ENCODE measurements at regions of chr10 and their contacts with region 1.

Region 1: GRCh38 chr10:100346765-100347567 is at the start of gene SCD:
- DNase-seq: peak; percentile 92
- H3K4me3 ChIP-seq: peak within 1 kb of the TSS; percentile 95
- H3K27ac ChIP-seq: peak within 1 kb of the TSS; percentile 63
- H3K27me3 ChIP-seq: no peaks in the 10 kb centered on the region
- CTCF ChIP-seq: no peak

Region 2: DNA sequence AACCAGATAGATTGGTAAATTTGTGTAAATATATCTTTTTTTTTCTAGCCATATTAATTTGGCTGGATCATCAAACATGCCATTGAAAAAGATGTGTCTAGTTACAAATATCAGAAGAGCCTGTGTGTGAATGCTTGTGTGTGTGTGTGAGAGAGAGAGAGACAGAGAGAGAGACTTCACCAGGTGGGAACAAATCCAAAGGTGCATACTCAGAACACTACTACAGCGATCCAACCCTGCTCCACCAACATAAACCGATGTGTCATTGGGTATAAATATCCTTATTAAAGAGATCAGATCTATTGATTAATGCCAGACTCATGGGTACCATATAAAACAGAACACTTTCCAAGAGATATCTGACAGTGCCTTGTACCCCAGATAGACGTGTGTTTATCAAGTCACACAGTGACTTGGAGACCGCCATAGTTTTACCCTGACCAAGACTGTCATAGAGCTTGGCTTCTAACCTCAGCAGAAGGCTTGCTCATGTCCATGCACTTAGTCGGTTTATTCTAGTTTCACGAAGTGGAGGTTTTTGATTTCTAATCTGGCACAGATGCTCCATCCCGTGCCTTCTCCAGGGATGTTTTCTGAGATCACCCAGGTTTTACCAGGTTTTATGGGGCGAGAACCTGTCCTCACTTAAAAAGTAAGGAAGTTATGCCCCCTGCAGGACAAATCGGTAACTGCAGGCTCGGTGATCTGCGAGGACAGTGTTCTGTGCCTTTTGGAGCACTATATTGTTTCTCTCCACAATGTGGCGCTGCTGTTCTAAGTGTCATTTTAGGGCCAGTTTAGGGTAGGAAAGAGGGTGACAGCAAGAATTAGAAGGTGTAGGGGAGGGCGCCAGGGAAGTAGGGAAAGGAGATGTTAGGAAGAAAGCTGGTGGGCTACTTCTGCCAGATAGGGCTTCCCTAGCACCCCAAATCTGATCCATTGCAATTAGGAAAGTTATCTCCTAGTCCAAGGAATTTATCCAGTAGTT is 86.6 kb after region 1 on chr10:
- in situ Hi-C with region 1: loop called (anchors 25 kb)
- DNase-seq: peak; percentile 92
- H3K4me3 ChIP-seq: no peak overlapping the region
- H3K27ac ChIP-seq: no peak overlapping the region
- H3K27me3 ChIP-seq: no peaks in the 10 kb centered on the region
- CTCF ChIP-seq: peak; percentile 99

Region 3: GRCh38 chr10:100518761-100519241 is 171.8 kb after region 1 on chr10:
- in situ Hi-C with region 1: loop called (anchors 25 kb)
- DNase-seq: peak; percentile 74
- H3K4me3 ChIP-seq: peak overlapping the region; percentile 57
- H3K27ac ChIP-seq: no peak overlapping the region
- H3K27me3 ChIP-seq: no peaks in the 10 kb centered on the region
- CTCF ChIP-seq: peak; percentile 78

Measured in brain microvascular endothelial cell (primary cell).